ENCODE measurements at regions of chr17 and their contacts with region 1.

Region 1: DNA sequence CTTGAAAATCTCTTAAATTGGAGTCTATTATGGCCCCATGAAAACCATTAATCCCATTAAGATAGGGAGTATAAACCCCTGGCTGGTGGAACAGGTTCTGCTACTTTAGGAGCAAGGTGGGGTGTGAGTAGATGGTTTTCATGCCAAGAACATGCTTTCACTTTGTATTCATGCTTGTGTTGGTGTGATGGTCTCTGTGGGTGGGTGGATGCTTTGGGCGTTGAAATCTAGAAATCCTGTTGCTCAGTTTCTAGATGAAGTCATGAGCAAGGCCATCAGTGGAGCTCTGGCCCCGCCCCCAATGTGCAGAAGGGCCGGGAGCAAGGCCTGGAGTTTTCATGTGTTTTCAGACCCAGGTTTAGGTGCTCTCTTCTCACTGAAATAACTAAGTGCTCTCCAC is 20.1 kb downstream of the PLD6 start:
- DNase-seq: peak; percentile 87
- H3K4me3 Mint-ChIP-seq: peak overlapping the region; percentile 67
- H3K27ac Mint-ChIP-seq: peak overlapping the region; percentile 78
- H3K4me1 Mint-ChIP-seq: peaks cover 51% of the 10 kb centered on the region
- H3K27me3 Mint-ChIP-seq: no peaks in the 10 kb centered on the region

Region 2: DNA sequence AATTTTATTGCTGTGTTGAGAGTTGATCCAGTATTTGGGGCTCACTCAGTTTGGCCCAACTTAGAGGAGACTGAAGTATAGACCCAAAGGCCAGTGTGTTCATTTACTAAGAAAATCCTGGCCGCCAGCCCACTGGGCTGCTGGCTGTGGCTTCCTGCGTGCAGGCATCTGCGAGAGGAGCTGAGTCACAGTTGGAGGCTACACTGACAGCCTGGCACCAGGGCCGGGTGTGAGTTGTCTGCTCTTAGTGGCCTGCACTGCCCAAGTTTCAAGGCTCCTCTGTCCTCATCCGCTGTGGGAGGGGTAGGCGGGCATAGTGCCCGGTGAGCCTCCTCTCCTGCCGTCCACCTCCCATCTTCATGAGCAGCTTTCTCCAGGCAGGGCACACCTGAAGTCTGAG is 34.1 kb before region 1 on chr17:
- intact Hi-C with region 1: loop called (anchors 2 kb)
- DNase-seq: no peak
- H3K4me3 Mint-ChIP-seq: no peak overlapping the region
- H3K27ac Mint-ChIP-seq: peak overlapping the region; percentile 85
- H3K4me1 Mint-ChIP-seq: peaks cover 42% of the 10 kb centered on the region
- H3K27me3 Mint-ChIP-seq: no peaks in the 10 kb centered on the region

Region 3: DNA sequence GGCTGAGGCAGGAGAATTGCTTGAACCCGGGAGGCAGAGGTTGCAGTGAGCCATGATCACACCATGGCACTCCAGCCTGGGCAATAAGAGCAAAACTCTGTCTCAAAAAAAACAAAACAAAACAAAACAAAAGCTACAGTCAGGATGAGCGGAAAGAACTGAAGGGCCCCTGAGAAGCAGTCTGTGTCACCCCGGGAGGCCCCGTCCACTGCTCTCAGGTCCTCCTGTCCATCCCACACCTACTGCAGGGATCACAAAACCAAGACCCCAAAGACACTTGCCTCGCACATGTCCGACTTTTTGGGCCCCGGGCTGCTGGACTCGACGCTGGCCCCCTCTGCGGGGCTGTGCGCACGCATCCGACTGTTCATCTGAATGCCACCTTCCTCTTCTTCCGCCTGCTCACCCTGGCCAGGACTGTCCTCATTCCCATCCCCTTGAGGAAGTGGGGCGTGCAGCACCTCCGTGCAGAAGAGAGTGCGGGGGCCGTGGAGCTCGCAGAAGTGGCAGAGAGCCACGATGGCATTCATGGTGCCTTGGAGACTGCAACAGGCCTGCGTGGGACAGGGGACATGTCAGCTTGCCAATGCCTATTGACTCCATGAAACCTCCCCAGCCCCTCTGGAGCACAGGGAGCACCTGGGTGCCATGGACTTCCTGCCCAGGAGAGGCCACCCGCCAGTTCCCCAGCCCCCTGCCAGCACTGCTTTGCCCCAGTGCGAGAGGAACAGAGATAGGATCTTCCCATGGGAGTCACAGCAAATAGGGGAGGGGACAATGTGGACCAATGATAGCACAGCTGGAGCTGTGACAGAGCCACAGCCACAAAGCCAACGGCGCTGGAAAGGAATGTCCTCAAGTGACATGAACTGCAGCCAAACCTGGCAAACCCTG is 41.8 kb after region 1 on chr17:
- intact Hi-C with region 1: no loop called
- DNase-seq: no peak
- H3K4me3 Mint-ChIP-seq: no peak overlapping the region
- H3K27ac Mint-ChIP-seq: no peak overlapping the region
- H3K4me1 Mint-ChIP-seq: peaks cover 2% of the 10 kb centered on the region
- H3K27me3 Mint-ChIP-seq: no peaks in the 10 kb centered on the region

Measured in activated CD4-positive, alpha-beta T cell treated with anti-CD3 and anti-CD28 coated beads, Interleukin-2, amount 10 ng/mL, durations not matched to agents 24 days and 14 days (primary cell).